K562 (cell line): ENCODE measurements at regions of chr7 and their contacts with region 1.

Region 1: DNA sequence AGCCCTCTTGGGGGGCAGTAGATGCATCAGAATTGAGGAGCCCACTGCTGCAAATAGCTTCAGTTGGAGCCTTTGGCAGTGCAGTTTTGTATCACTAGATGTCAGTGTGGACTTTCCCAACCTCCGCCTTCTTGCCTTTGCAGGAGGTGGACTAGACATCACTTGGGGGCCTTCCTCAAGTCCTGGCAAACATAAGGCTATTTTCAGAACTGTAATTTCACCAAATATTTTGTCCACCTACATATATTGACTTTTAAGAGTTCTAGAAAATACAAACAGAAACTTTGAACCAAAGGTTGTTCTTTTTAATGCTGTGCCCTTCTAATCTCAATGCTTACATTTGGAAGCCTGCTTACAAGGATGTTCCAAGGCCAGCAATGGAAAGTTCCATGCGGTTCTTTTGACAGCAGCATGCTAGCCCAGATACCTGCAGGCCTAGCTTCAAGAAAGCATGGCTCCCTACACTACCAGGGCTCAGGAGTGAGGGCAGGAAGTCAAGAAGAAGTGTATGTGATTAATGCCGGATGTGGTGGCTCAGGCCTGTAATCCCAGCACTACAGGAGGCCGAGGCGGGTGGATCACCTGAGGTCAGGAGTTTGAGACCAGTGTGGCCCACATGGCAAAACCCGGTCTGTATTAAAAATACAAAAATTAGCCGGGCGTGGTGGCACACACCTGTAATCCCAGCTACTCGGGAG is 8.0 kb upstream of the ZNRF2 start:
- DNase-seq: peak in 2 of 4 experiments; percentile 57 to 75
- ATAC-seq: peak; percentile 91
- H3K4me3 ChIP-seq: no peak overlapping the region
- H3K27ac ChIP-seq: no peak overlapping the region
- H3K4me1 ChIP-seq: peaks cover 0 to 5% of the 10 kb centered on the region in 2 experiments; a peak in 3 of 5 replicates
- H3K27me3 ChIP-seq: no peaks in the 10 kb centered on the region
- CTCF ChIP-seq: peak; percentile 82 to 86 (median 82)
- EP300 ChIP-seq: no peak
- POLR2A ChIP-seq: no peak
- RAD21 ChIP-seq: peak; percentile 85 to 94

Region 2: GRCh38 chr7:30348083-30348560 is 71.8 kb after region 1 on chr7:
- CTCF ChIA-PET with region 1: interaction called, 3 read pairs
- POLR2A ChIA-PET with region 1: no interaction called
- in situ Hi-C with region 1: no loop called
- intact Hi-C with region 1: loop called (anchors 1 kb)
- DNase-seq: peak; percentile 10 to 77 (median 38)
- ATAC-seq: peak; percentile 84
- H3K4me3 ChIP-seq: no peak overlapping the region; the same call in 1 of the 2 replicates
- H3K27ac ChIP-seq: peak overlapping the region; percentile 80
- H3K4me1 ChIP-seq: peaks cover 0 to 48% of the 10 kb centered on the region in 2 experiments; a peak in 3 of 5 replicates
- H3K27me3 ChIP-seq: no peaks in the 10 kb centered on the region
- CTCF ChIP-seq: no peak
- EP300 ChIP-seq: peak; percentile 62
- POLR2A ChIP-seq: no peak
- RAD21 ChIP-seq: 0 out of 4 replicates have a peak, but pooled peaks of 1 of the 2 experiments have one; percentile 11

Region 3: GRCh38 chr7:30412810-30413504 is 136.6 kb after region 1 on chr7:
- CTCF ChIA-PET with region 1: interaction called, 25 read pairs
- POLR2A ChIA-PET with region 1: no interaction called
- in situ Hi-C with region 1: loop called (anchors 5 kb)
- intact Hi-C with region 1: loop called (anchors 2 kb)
- DNase-seq: peak; percentile 36 to 77 (median 54)
- ATAC-seq: peak; percentile 94
- H3K4me3 ChIP-seq: no peak overlapping the region
- H3K27ac ChIP-seq: no peak overlapping the region
- H3K4me1 ChIP-seq: no peaks in the 10 kb centered on the region; a peak in 1 of 5 replicates
- H3K27me3 ChIP-seq: no peaks in the 10 kb centered on the region
- CTCF ChIP-seq: peak; percentile 55 to 75 (median 75)
- EP300 ChIP-seq: no peak
- POLR2A ChIP-seq: no peak
- RAD21 ChIP-seq: peak; percentile 85 to 92

Region 4: GRCh38 chr7:30731619-30732018 is 455.3 kb after region 1 on chr7:
- CTCF ChIA-PET with region 1: no interaction called
- POLR2A ChIA-PET with region 1: no interaction called
- in situ Hi-C with region 1: no loop called
- intact Hi-C with region 1: loop called (anchors 10 kb)
- DNase-seq: no peak
- ATAC-seq: peak; percentile 15; the same call in 1 of the 3 replicates
- H3K4me3 ChIP-seq: no peak overlapping the region
- H3K27ac ChIP-seq: no peak overlapping the region
- H3K4me1 ChIP-seq: peaks cover 4% of the 10 kb centered on the region in 2 experiments; a peak in 3 of 5 replicates
- H3K27me3 ChIP-seq: peaks cover 53 to 73% of the 10 kb centered on the region in 2 experiments
- CTCF ChIP-seq: no peak
- EP300 ChIP-seq: no peak
- POLR2A ChIP-seq: no peak
- RAD21 ChIP-seq: no peak